Heart left ventricle (tissue), 16 donors: ENCODE measurements at regions of chr2 and their contacts with region 1.

Region 1: DNA sequence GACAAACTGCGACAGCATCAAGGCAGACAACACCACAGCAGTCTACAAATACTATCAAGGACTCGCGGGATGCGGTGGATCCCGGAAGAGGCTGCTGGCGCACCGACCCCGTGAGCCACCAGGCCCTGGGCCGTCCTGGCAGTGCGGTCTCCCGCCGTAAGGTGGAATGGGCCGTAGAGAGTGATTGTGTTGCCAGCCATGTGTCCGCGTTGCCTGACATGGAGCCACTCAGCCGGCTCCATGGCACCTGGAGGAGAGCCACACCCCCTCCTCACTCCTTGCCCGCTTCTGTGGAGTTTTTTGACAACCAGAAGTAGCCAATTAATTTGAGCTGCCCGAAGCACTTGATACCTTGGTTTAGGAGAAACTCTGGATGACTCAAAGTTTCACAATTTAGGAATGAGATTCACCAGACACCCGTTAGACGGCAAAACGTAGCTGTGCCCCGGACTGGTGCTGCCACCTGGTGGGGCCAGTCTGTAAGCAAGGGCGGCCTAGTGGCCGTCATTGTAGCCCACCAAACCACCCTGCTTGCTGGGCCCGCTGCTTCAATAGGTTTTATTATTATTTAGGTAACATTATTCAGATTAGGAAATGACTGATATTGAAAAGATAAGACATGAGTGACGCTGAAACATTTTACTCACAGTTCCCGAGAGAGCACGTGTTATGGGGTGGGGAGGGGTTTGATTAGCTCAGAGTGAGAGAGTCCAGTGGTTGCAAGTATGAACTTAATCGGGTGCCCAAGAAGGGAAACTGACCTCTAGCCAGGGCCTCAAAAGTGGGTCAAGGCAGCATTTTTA is 10.2 kb upstream of the IMP4 start:
- DNase-seq: peak; percentile 64 to 83 (median 76)
- ATAC-seq: peak in 3 of 4 donors; percentile 70 to 81 (median 75)
- H3K4me3 ChIP-seq: no peak overlapping the region
- H3K27ac ChIP-seq: no peak overlapping the region
- H3K4me1 ChIP-seq: peaks cover 0 to 8% (median 3%) of the 10 kb centered on the region in 12 donors
- H3K27me3 ChIP-seq: peaks cover 0 to 40% (median 3%) of the 10 kb centered on the region in 9 donors
- CTCF ChIP-seq: peak; percentile 85 to 99 (median 90)
- POLR2A ChIP-seq: no peak

Region 2: GRCh38 chr2:129885736-129886135 is 446.7 kb before region 1 on chr2:
- intact Hi-C with region 1: loop called in 1 of 10 experiments (anchors 10 kb)
- DNase-seq: no peak
- ATAC-seq: no peak
- H3K4me3 ChIP-seq: no peak overlapping the region
- H3K27ac ChIP-seq: no peak overlapping the region
- H3K4me1 ChIP-seq: no peaks in the 10 kb centered on the region
- H3K27me3 ChIP-seq: peaks cover 0 to 8% (median 0%) of the 10 kb centered on the region in 9 donors
- CTCF ChIP-seq: peak in 1 of 12 donors; percentile 11
- POLR2A ChIP-seq: no peak

Region 3: GRCh38 chr2:129923265-129924091 is 409.0 kb before region 1 on chr2:
- intact Hi-C with region 1: loop called in 1 of 10 experiments (anchors 5 kb)
- DNase-seq: no peak
- ATAC-seq: peak; percentile 54 to 74 (median 64)
- H3K4me3 ChIP-seq: no peak overlapping the region
- H3K27ac ChIP-seq: no peak overlapping the region
- H3K4me1 ChIP-seq: peaks cover 0 to 11% (median 3%) of the 10 kb centered on the region in 12 donors
- H3K27me3 ChIP-seq: peaks cover 4 to 39% (median 15%) of the 10 kb centered on the region in 9 donors
- CTCF ChIP-seq: peak; percentile 22 to 59 (median 48)
- POLR2A ChIP-seq: no peak

Region 4: GRCh38 chr2:129936334-129936934 is 396.0 kb before region 1 on chr2:
- intact Hi-C with region 1: loop called in 5 of 10 experiments (anchors 2 to 5 kb)
- DNase-seq: peak in 1 of 5 donors; percentile 60
- ATAC-seq: no peak
- H3K4me3 ChIP-seq: no peak overlapping the region
- H3K27ac ChIP-seq: no peak overlapping the region
- H3K4me1 ChIP-seq: peaks cover 0 to 2% (median 0%) of the 10 kb centered on the region in 12 donors
- H3K27me3 ChIP-seq: peaks cover 0 to 45% (median 9%) of the 10 kb centered on the region in 9 donors
- CTCF ChIP-seq: peak in 6 of 12 donors; percentile 25 to 63 (median 49)
- POLR2A ChIP-seq: no peak

Region 5: GRCh38 chr2:130150181-130151144 is 182.0 kb before region 1 on chr2:
- intact Hi-C with region 1: loop called in 5 of 10 experiments (anchors 5 to 10 kb)
- DNase-seq: no peak
- ATAC-seq: no peak
- H3K4me3 ChIP-seq: no peak overlapping the region
- H3K27ac ChIP-seq: no peak overlapping the region
- H3K4me1 ChIP-seq: no peaks in the 10 kb centered on the region
- H3K27me3 ChIP-seq: peaks cover 0 to 2% (median 0%) of the 10 kb centered on the region in 9 donors
- CTCF ChIP-seq: no peak
- POLR2A ChIP-seq: no peak

Region 6: GRCh38 chr2:130156624-130157004 is 175.9 kb before region 1 on chr2:
- intact Hi-C with region 1: loop called in 6 of 10 experiments (anchors 2 to 10 kb)
- DNase-seq: no peak
- ATAC-seq: no peak
- H3K4me3 ChIP-seq: no peak overlapping the region
- H3K27ac ChIP-seq: no peak overlapping the region
- H3K4me1 ChIP-seq: peaks cover 0 to 16% (median 0%) of the 10 kb centered on the region in 12 donors
- H3K27me3 ChIP-seq: no peaks in the 10 kb centered on the region
- CTCF ChIP-seq: no peak
- POLR2A ChIP-seq: no peak

Region 7: DNA sequence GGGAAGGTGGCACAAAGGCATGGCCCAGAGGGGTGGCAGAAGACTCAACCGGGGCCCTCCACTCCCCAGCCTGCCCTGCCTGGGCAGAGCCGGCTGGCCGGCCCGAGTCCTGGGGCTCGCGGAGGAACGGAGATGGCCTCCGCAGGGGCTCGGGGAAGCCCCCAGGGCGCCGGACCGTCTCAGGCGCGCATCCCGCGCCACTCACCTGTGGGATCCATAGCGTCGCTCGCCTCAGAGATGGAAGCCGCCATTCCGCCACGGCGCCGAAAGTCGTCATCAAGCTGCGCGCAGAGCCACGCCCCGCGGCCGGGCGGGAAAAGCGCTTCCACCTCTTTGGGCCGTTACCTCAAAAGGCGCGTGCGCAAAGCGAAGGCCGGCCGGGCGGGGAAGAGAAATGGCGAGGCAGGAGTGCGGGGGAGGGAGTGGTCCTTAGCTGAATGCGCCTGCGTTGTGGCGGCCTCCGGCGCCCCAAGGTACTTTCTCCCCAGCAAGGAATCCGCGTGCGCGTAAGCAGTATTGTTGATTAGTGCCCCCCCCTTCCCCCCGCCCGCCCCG is 151.1 kb before region 1 on chr2 and contains the start of gene SMPD4:
- intact Hi-C with region 1: loop called in 8 of 10 experiments (anchors 2 to 10 kb)
- DNase-seq: peak; percentile 97 to 99 (median 98)
- ATAC-seq: peak; percentile 90 to 96 (median 93)
- H3K4me3 ChIP-seq: peak within 1 kb of the TSS; percentile 59 to 100 (median 88)
- H3K27ac ChIP-seq: peak within 1 kb of the TSS; percentile 54 to 98 (median 95)
- H3K4me1 ChIP-seq: peaks cover 6 to 31% (median 20%) of the 10 kb centered on the region in 12 donors
- H3K27me3 ChIP-seq: no peaks in the 10 kb centered on the region
- CTCF ChIP-seq: no peak
- POLR2A ChIP-seq: no peak
- total RNA-seq, gene SMPD4: 23.4 to 32.7 (median 29.2) TPM